GM10248 (cell line): ENCODE measurements at regions of chr13 and their contacts with region 1.

Region 1: GRCh38 chr13:91739751-91740150 is 341.3 kb downstream of the GPC5 start:
- DNase-seq: no peak
- CTCF ChIP-seq: no peak

Region 2: DNA sequence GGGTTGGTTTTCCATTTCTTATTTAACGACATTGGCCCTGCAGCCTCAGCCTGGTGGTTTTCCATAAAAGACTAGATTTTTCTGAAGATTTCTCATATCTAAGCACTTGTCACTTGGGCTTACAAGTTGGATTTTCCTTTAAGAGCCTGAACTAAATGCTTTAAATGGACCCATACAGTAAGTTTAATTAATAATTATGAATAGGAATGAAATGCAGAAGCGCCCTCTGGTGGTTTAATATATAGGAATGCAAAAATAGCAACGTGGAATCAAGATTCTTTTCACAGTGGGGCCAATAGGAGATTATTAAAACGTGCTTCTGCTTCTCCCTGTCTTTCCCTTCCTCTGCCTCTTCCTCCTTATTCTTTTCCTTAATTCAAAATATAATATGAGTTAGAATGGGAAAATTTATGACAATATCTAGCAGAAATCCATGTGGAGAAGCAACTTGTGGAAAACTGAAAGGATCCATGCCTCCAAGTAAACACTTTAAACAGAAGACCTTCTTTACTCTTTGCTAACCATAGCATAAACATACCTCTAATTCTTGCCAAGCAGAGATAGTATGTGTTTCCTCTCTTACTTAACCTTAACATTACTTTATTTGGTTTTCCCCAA is 17.4 kb before region 1 on chr13:
- CTCF ChIA-PET with region 1: interaction called, 12 read pairs
- POLR2A ChIA-PET with region 1: no interaction called
- DNase-seq: peak; percentile 15
- CTCF ChIP-seq: peak; percentile 42

Region 3: GRCh38 chr13:91845612-91846011 is 105.9 kb after region 1 on chr13:
- CTCF ChIA-PET with region 1: no interaction called
- POLR2A ChIA-PET with region 1: no interaction called
- DNase-seq: no peak
- CTCF ChIP-seq: no peak

Region 4: DNA sequence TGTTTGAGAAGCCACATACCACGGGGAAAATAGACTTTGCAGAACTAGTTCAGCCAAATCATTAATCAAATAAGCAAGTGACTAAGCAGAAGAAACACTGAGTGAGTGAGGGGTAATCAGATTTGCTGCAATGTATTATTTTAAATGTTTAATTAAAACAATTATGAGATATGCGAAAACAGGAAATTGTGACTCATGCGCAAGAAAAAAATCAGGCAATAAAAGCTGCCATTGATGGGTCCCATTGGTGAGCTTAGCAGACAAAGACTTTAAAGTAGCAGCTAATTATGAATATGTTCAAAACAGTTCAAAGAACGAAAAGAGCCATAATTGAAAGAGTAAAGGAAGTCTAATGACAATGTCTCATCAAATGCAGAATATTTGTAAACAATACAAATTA is 302.8 kb after region 1 on chr13:
- CTCF ChIA-PET with region 1: no interaction called
- POLR2A ChIA-PET with region 1: no interaction called
- DNase-seq: no peak
- CTCF ChIP-seq: no peak